Activated naive CD8-positive, alpha-beta T cell treated with anti-CD3 and anti-CD28 coated beads, Interleukin-2, amount 10 ng/mL, durations not matched to agents 7 days and 5 days (primary cell): ENCODE measurements at regions of chr7 and their contacts with region 1.

Region 1: GRCh38 chr7:66894463-66895080 is 26.5 kb upstream of the TMEM248 start:
- DNase-seq: no peak
- ATAC-seq: peak; percentile 33
- H3K4me3 Mint-ChIP-seq: no peak overlapping the region
- H3K27ac Mint-ChIP-seq: no peak overlapping the region
- H3K4me1 Mint-ChIP-seq: no peaks in the 10 kb centered on the region
- H3K27me3 Mint-ChIP-seq: no peaks in the 10 kb centered on the region

Region 2: GRCh38 chr7:66824041-66824625 is 70.4 kb before region 1 on chr7:
- POLR2A ChIA-PET with region 1: interaction called, 10 read pairs
- DNase-seq: no peak
- ATAC-seq: no peak
- H3K4me3 Mint-ChIP-seq: no peak overlapping the region
- H3K27ac Mint-ChIP-seq: no peak overlapping the region
- H3K4me1 Mint-ChIP-seq: no peaks in the 10 kb centered on the region
- H3K27me3 Mint-ChIP-seq: no peaks in the 10 kb centered on the region

Region 3: DNA sequence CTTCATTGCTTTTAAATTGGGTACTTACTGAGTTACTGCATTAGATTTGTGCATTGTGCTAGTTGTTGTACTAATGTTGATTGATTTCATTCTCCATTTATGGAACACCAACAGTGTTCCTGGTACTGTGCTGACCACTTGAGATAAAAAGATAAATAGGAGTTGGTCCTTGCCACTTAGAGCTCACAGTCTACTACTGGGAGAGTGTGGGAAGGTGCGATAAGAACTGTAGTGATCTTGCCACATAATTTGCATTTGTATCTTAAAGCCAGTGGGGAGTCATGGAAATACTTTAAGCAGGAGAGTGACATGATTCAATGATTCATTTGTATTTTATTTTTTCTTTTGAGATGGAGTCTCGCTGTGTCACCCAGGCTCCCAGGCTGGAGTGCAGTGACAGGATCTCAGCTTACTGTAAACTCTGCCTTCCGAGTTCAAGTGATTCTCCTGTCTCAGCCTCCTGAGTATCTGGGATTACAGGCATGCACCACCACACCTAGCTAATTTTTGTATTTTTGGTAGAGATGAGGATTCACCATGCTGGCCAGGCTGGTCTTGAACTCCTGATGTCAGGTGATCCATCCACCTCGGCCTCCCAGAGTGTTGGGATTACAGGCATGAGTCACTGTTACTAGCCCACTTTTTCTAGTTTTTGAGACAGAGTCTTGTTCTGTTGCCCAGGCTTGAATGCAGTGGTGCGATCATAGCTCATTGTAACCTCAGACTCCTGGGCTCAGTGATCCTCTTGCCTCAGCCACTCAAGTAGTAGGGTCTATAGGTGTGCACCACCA is 24.7 kb before region 1 on chr7:
- POLR2A ChIA-PET with region 1: no interaction called
- DNase-seq: no peak
- ATAC-seq: no peak
- H3K4me3 Mint-ChIP-seq: no peak overlapping the region
- H3K27ac Mint-ChIP-seq: no peak overlapping the region
- H3K4me1 Mint-ChIP-seq: no peaks in the 10 kb centered on the region
- H3K27me3 Mint-ChIP-seq: no peaks in the 10 kb centered on the region